GM12878 (cell line): ENCODE measurements at regions of chr11 and their contacts with region 1.

Region 1: DNA sequence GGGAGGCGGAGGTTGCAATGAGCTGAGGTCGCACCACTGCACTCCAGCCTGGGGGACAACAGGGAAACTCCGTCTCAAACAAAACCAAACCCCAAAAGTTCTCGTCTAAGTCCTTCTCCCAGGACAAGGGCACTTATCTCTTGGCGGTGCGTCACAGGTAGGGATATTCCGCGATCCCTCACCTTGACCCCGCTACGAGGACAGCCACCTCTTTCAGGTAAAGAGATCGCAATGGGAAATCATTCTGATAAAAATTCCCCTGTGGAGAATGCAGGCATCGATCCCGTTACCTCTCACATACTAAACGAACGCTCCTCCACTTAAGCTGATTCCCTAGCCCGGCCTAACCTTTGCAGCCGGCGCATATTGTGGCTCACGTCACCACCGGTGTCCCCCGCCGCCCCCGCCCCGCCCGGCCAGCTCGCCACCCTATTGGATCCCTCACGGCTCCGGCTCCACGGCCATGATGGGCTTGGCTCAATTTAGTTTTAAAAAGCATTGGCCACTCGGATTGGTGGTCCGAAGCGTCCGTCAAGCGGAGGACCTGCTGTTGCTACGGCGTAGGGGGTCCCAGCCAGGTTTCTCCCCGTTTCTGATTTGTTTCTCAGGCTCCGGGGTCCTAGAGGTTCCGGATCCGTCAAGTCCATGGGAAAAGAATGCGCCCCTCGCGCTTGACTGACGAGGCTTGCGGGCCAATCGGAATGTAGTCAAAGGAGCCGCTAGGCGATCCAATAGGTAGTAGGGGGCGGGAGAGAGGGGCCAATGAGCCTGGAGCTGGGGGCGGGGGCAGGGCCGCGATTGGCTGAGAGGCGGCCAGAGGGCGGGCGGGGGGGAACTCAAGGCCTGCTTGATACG is 439 bp upstream of the PPP6R3 start:
- DNase-seq: peak; percentile 90
- ATAC-seq: peak; percentile 93
- H3K4me3 ChIP-seq: peak overlapping the region; percentile 91
- H3K27ac ChIP-seq: peak overlapping the region; percentile 97
- H3K4me1 ChIP-seq: peaks cover 2% of the 10 kb centered on the region; the same call in 1 of the 2 replicates
- H3K27me3 ChIP-seq: no peaks in the 10 kb centered on the region
- CTCF ChIP-seq: no peak
- EP300 ChIP-seq: peak in 1 of 2 experiments; percentile 70; a peak in 2 of 4 replicates
- POLR2A ChIP-seq: no peak
- RAD21 ChIP-seq: no peak

Region 2: DNA sequence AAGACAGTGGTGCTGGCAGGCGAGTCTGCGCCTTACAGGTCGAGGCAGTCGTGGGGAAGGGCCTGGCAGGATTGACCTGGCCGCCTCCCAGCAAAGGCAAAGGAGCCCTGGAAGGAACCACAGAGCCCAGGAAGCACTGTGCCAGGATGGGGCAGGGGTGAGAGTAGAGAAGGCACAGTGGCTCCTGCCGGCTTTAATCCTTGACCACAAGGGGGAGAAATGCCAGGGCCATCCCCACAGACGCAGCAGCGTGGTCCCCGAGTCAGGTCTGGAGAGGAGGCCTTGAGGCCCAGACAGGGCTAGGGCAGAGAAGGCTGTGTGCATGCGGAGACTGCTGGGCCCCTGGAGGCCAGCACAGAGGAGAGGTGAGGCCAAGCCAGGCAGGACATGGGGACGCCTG is 439.5 kb before region 1 on chr11:
- CTCF ChIA-PET with region 1: no interaction called
- POLR2A ChIA-PET with region 1: no interaction called
- RAD21 ChIA-PET with region 1: no interaction called
- SMC1A ChIA-PET with region 1: no interaction called
- in situ Hi-C with region 1: no loop called
- intact Hi-C with region 1: loop called (anchors 10 kb)
- DNase-seq: no peak
- ATAC-seq: peak; percentile 53
- H3K4me3 ChIP-seq: no peak overlapping the region
- H3K27ac ChIP-seq: no peak overlapping the region
- H3K4me1 ChIP-seq: peaks cover under 1% of the 10 kb centered on the region; the same call in 1 of the 2 replicates
- H3K27me3 ChIP-seq: no peaks in the 10 kb centered on the region; a peak in 1 of 4 replicates
- CTCF ChIP-seq: peak in 2 of 3 experiments; percentile 11 to 14; a peak in 1 of 6 replicates
- EP300 ChIP-seq: no peak
- POLR2A ChIP-seq: no peak
- RAD21 ChIP-seq: 0 out of 2 replicates have a peak, but pooled peaks have one; percentile 2